ENCODE measurements at regions of chr1 and their contacts with region 1.

Region 1: DNA sequence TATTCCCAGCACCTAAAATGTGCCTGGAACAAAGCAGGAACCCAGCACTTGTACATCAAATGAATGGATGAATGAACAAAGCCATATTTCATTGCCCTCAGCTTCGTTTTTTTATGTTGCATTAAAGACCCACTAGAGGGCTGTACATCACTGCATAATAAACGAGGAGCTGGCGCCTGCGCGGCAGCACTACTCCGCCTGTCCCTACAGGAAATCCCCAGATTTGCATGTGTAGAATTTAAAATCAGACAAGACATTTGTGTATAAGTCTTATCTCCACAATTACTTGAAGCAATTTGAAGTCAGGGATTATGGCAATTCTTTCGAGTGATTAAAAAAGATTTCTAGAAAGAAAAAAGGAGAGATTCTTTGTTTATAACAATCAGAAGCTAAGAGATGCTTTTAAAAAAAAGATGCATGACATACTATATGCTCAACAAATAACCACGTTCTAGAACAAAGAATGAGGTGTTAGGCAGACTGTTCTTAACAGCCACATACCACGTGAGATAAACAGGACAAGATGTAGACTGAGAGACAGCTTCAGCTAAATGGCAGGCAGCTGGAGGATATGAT is 5.4 kb upstream of the NEK2 start:
- DNase-seq: peak; percentile 78 to 92 (median 84)
- ATAC-seq: peak; percentile 82
- H3K4me3 ChIP-seq: no peak overlapping the region
- H3K27ac ChIP-seq: no peak overlapping the region
- H3K4me1 ChIP-seq: peaks cover 4 to 12% of the 10 kb centered on the region in 2 experiments; a peak in 4 of 5 replicates
- H3K27me3 ChIP-seq: peaks cover 7 to 27% of the 10 kb centered on the region in 2 experiments; a peak in 2 of 5 replicates
- CTCF ChIP-seq: peak; percentile 92 to 97 (median 97)
- EP300 ChIP-seq: 0 out of 2 replicates have a peak, but pooled peaks have one; percentile 15
- POLR2A ChIP-seq: no peak
- RAD21 ChIP-seq: peak; percentile 95 to 97

Region 2: DNA sequence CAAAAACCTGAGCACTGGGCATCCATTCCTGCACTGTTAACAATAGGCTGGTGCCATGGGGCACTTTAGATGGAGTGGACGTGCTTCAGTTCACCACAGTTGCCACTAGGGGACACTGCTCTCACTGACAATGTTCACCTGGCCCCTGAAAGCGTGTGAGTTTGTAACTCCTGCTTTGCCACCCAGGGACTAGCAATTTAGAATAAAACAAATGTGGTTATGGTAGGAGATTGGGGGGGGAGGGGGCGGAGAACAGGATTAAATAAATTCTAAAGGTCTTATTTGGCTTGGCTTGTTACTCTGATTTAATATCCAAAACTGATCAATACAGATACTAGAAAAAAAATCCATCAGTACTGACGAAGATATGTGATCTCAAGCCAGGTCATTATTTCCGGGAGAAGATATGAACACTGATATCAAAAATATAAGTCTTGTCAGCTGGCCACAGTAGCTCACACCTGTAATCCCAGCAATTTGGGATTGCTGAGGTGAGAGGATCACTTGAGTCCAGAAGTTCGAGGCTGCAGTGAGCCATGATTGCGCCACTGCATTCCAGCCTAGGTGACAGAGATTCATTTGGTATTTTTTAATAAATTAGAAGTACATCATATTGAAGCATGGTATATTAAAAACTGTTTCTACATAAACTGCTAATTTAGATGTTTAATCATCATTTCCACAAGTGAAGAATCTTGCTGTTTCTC is 331.3 kb after region 1 on chr1:
- CTCF ChIA-PET with region 1: interaction called, 4 read pairs
- POLR2A ChIA-PET with region 1: interaction called, 5 read pairs
- in situ Hi-C with region 1: no loop called
- intact Hi-C with region 1: loop called (anchors 5 kb)
- DNase-seq: peak; percentile 77 to 82 (median 78)
- ATAC-seq: peak; percentile 97
- H3K4me3 ChIP-seq: no peak overlapping the region
- H3K27ac ChIP-seq: no peak overlapping the region
- H3K4me1 ChIP-seq: no peaks in the 10 kb centered on the region
- H3K27me3 ChIP-seq: no peaks in the 10 kb centered on the region
- CTCF ChIP-seq: peak; percentile 92 to 98 (median 95)
- EP300 ChIP-seq: 0 out of 2 replicates have a peak, but pooled peaks have one; percentile 16
- POLR2A ChIP-seq: no peak
- RAD21 ChIP-seq: peak; percentile 89 to 95

Region 3: GRCh38 chr1:212062832-212063438 is 382.1 kb after region 1 on chr1:
- CTCF ChIA-PET with region 1: no interaction called
- POLR2A ChIA-PET with region 1: no interaction called
- in situ Hi-C with region 1: no loop called
- intact Hi-C with region 1: loop called (anchors 1 kb)
- DNase-seq: peak; percentile 39 to 51 (median 41)
- ATAC-seq: peak; percentile 77
- H3K4me3 ChIP-seq: no peak overlapping the region
- H3K27ac ChIP-seq: no peak overlapping the region
- H3K4me1 ChIP-seq: no peaks in the 10 kb centered on the region
- H3K27me3 ChIP-seq: no peaks in the 10 kb centered on the region
- CTCF ChIP-seq: peak; percentile 48 to 78 (median 65); a peak in 5 of 6 replicates
- EP300 ChIP-seq: no peak
- POLR2A ChIP-seq: no peak
- RAD21 ChIP-seq: peak; percentile 70 to 78

Region 4: GRCh38 chr1:212368073-212368484 is 687.2 kb after region 1 on chr1:
- CTCF ChIA-PET with region 1: no interaction called
- POLR2A ChIA-PET with region 1: no interaction called
- in situ Hi-C with region 1: loop called (anchors 25 kb)
- intact Hi-C with region 1: loop called (anchors 5 kb)
- DNase-seq: peak; percentile 68 to 83 (median 71)
- ATAC-seq: peak; percentile 98
- H3K4me3 ChIP-seq: no peak overlapping the region
- H3K27ac ChIP-seq: no peak overlapping the region
- H3K4me1 ChIP-seq: no peaks in the 10 kb centered on the region
- H3K27me3 ChIP-seq: no peaks in the 10 kb centered on the region
- CTCF ChIP-seq: peak; percentile 82 to 85 (median 83)
- EP300 ChIP-seq: no peak
- POLR2A ChIP-seq: no peak
- RAD21 ChIP-seq: peak; percentile 45 to 90